Mammary epithelial cell (primary cell): ENCODE measurements at regions of chr15 and their contacts with region 1.

Region 1: DNA sequence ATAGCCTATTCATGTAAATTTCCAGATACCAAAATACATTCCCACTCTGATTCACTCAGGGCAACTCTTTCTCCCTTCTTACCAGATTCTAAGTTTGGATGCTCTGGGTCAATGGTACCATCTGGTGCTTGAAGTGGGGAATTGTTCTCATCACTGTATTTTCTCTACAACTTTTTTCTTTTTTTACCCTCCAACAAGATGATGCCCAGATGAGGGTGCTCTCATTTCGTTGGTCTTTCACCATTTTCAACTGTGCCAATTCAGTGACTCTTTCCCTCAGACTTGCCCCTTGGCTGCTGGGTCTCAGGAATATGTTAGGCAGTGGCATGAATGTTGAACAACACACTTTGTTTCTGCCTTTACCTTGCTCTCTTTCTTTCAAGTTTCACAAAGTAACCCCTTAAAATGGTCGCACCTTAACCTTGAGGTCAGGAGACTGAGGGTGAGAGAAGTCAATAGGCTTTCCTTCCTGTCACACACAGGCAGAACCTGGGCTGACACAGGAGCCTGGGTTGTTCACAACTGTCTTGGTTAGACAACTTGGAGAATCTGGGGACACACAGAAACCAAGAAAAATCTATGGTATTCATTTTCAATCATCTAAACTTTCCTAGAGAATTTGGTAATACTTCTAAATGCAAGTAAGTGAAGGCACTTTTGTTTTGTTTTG is 330.7 kb upstream of the SLCO3A1 start:
- DNase-seq: peak; percentile 66
- H3K4me3 ChIP-seq: no peak overlapping the region
- H3K27ac ChIP-seq: no peak overlapping the region
- H3K4me1 ChIP-seq: no peaks in the 10 kb centered on the region
- H3K27me3 ChIP-seq: no peaks in the 10 kb centered on the region
- CTCF ChIP-seq: peak; percentile 51 to 91

Region 2: DNA sequence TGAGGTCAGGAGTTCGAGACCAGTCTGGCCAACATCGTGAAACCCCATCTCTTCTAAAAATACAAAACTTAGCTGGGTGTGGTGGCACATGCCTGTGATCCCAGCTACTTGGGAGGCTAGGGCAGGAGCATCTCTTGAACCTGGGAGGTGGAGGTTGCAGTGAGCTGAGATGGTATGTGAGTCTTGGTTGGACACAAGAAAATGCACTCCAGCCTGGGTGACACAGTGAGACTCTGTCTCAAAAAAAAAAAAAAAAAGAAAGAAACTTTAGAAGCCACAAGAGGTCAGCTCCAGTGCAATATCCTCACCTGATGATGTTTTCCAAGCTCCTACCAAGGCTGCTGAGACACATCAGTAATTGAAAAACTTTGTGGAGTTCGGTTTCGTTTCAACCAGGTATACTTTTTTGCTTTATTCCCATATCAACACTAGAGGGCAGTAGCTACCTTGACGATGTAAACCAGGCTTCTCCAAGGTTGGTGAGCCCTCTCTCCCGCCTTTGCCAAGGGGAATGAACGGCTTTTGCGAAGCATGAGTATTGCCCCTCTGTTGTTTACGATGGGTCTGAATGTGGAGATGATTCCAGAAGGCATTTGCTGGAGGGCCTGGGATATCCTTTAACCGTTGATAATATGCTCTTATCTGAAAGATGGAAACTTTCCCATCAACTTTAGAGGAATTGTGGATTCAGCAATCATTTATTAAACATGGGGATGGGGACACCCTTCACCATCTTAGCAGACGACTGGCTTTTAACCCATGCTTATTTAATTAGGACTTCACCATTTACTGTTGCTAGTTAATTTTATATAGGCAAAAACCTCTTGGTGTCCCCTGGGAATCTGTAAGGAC is 220.0 kb before region 1 on chr15:
- CTCF ChIA-PET with region 1: no interaction called
- dilution Hi-C with region 1: loop called (anchors 25 kb)
- in situ Hi-C with region 1: loop called (anchors 5 to 10 kb)
- intact Hi-C with region 1: loop called (anchors 1 kb)
- DNase-seq: peak; percentile 57
- H3K4me3 ChIP-seq: no peak overlapping the region
- H3K27ac ChIP-seq: no peak overlapping the region
- H3K4me1 ChIP-seq: no peaks in the 10 kb centered on the region
- H3K27me3 ChIP-seq: peaks cover 3% of the 10 kb centered on the region
- CTCF ChIP-seq: peak; percentile 62 to 79

Region 3: GRCh38 chr15:91366111-91366510 is 156.7 kb before region 1 on chr15:
- CTCF ChIA-PET with region 1: no interaction called
- dilution Hi-C with region 1: no loop called
- in situ Hi-C with region 1: no loop called
- intact Hi-C with region 1: no loop called
- DNase-seq: no peak
- H3K4me3 ChIP-seq: no peak overlapping the region
- H3K27ac ChIP-seq: no peak overlapping the region
- H3K4me1 ChIP-seq: no peaks in the 10 kb centered on the region
- H3K27me3 ChIP-seq: no peaks in the 10 kb centered on the region
- CTCF ChIP-seq: no peak

Region 4: DNA sequence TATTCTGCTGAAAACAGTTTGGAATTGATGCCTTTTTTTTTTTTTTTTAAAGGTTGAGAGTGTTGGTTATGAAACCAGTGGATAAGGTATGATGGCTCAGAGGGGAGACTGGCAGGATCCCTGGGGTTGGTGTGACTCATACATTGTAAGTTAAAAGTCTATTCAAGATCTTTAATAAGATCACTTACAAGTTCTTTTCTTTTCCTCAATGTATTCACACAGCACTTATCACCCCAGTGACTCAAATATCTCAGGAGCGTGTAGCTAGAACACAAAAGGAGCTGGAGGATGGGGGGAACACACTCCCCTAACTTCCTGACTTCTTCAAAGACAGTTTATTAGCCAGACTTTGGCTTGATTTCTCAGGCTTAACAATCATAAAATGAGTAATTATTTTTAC is 137.5 kb before region 1 on chr15:
- CTCF ChIA-PET with region 1: no interaction called
- dilution Hi-C with region 1: no loop called
- in situ Hi-C with region 1: loop called in 1 of 2 experiments (anchors 25 kb)
- intact Hi-C with region 1: loop called (anchors 5 kb)
- DNase-seq: peak; percentile 93
- H3K4me3 ChIP-seq: no peak overlapping the region
- H3K27ac ChIP-seq: peak overlapping the region; percentile 49
- H3K4me1 ChIP-seq: peaks cover 16% of the 10 kb centered on the region
- H3K27me3 ChIP-seq: no peaks in the 10 kb centered on the region
- CTCF ChIP-seq: no peak

Region 5: DNA sequence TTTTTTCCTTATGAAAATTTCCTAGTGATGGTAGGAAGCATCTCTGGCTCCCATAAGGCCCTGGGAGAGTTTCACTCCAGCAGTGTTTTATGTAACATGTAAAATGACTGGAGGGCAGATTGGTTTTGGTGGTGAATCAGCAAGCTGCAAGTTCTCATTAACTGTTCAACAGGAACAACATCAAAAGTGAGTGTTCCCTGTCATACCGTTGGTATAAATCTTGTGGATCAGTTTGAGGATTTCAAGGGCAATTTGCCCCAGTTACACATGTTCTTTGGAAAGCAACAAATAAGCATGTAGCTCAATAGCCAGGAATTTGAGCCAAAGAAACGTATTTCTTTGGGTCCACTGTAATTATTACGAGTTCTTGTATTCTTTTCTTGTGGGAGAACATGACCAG is 77.0 kb before region 1 on chr15:
- CTCF ChIA-PET with region 1: no interaction called
- dilution Hi-C with region 1: no loop called
- in situ Hi-C with region 1: no loop called
- intact Hi-C with region 1: no loop called
- DNase-seq: peak; percentile 94
- H3K4me3 ChIP-seq: no peak overlapping the region
- H3K27ac ChIP-seq: peak overlapping the region; percentile 34
- H3K4me1 ChIP-seq: peaks cover 13% of the 10 kb centered on the region
- H3K27me3 ChIP-seq: no peaks in the 10 kb centered on the region
- CTCF ChIP-seq: no peak

Region 6: GRCh38 chr15:91553196-91553854 is 30.5 kb after region 1 on chr15:
- CTCF ChIA-PET with region 1: no interaction called
- dilution Hi-C with region 1: no loop called
- in situ Hi-C with region 1: no loop called
- intact Hi-C with region 1: no loop called
- DNase-seq: no peak
- H3K4me3 ChIP-seq: no peak overlapping the region
- H3K27ac ChIP-seq: no peak overlapping the region
- H3K4me1 ChIP-seq: no peaks in the 10 kb centered on the region
- H3K27me3 ChIP-seq: no peaks in the 10 kb centered on the region
- CTCF ChIP-seq: no peak

Region 7: GRCh38 chr15:91589356-91589755 is 66.6 kb after region 1 on chr15:
- CTCF ChIA-PET with region 1: no interaction called
- dilution Hi-C with region 1: no loop called
- in situ Hi-C with region 1: no loop called
- intact Hi-C with region 1: loop called (anchors 10 kb)
- DNase-seq: no peak
- H3K4me3 ChIP-seq: no peak overlapping the region
- H3K27ac ChIP-seq: no peak overlapping the region
- H3K4me1 ChIP-seq: no peaks in the 10 kb centered on the region
- H3K27me3 ChIP-seq: no peaks in the 10 kb centered on the region
- CTCF ChIP-seq: peak; percentile 4 to 12

Region 8: DNA sequence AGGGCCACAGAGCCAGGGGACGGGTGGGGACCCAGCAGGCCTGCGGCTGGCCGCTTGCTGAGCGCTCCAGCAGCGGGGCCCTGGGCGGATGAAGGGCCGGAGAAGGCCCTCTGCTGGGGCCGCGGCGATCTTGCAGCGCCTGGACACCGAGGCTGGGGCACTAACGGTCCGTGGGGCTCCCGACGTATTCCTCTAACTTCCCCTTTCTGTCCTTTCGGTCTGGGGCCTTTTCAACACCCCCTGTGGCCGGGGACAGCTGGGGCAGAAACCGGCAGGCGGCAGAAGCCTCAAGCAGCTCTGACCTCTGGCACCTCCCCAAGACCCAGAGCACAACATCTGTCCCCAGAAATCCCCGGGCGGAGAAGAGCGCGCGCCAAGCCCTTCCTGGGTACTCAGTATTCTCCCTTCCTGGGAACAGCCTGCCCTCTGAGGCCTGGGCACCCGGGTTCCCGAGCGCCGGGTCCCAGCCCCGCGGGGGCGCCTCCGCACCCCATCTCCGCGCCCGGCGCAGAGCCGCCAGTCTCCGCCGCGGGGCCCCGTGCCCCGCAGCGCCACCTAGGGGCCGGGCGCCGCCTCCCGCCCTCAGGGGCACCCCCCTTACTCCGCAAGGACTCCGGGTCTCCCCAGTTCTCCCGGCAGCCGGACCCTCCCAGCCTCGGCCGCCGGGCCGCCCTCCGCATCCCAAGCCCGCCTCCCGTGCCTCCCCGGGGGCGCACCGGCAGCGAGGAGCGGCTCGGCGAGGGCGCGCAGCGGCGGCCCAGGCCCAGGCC is 330.1 kb after region 1 on chr15:
- CTCF ChIA-PET with region 1: no interaction called
- dilution Hi-C with region 1: no loop called
- in situ Hi-C with region 1: no loop called
- intact Hi-C with region 1: loop called (anchors 5 kb)
- DNase-seq: peak; percentile 67
- H3K4me3 ChIP-seq: peak overlapping the region; percentile 72 to 77 (median 75)
- H3K27ac ChIP-seq: peak overlapping the region; percentile 70
- H3K4me1 ChIP-seq: peaks cover 26% of the 10 kb centered on the region
- H3K27me3 ChIP-seq: no peaks in the 10 kb centered on the region
- CTCF ChIP-seq: peak; percentile 36 to 66